Mammary epithelial cell (primary cell): ENCODE measurements at regions of chr1 and their contacts with region 1.

Region 1: GRCh38 chr1:170758992-170759391 is 95.1 kb downstream of the PRRX1 start:
- DNase-seq: no peak
- H3K4me3 ChIP-seq: no peak overlapping the region
- H3K27ac ChIP-seq: no peak overlapping the region
- H3K4me1 ChIP-seq: no peaks in the 10 kb centered on the region
- H3K27me3 ChIP-seq: no peaks in the 10 kb centered on the region
- CTCF ChIP-seq: no peak

Region 2: DNA sequence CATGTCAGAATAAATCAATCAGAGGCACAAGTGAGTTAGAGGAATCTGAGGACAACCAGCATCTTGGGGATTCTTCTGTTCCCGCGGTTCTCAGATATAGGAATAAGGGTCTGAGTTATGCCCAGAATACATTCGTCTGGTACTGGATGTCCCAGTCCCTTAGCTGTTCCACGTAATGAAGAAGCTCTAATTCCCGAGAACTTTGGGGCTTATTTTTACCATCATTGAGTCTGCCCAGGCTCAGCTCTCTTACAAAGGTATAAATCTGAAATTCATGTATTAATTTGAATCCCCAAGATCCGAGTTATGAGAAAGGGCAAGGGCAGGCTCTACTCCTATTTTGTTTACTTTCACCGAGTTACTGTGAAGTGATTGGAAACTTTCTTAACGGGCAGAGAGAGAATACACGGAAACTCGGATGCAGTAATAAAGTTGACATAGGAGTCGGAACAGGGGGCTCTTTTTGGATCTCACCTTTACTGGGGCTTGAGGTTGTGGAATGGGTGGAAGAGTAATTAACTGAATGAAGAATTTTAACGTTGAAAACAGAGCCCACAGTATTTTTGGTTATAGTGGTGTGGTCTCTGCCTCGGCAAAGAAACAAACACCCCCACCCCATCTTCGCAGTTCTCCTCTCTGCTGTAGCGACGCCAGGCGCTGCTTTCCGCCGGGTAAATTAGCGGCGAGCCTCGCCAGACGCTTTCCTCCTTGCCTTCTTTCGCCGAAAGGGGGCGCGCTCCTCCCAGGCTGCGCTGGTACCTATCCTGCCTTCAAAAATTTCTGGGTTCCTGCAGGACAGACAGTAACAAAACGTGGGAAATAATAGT is 88.0 kb before region 1 on chr1:
- CTCF ChIA-PET with region 1: no interaction called
- dilution Hi-C with region 1: no loop called
- in situ Hi-C with region 1: no loop called
- intact Hi-C with region 1: no loop called
- DNase-seq: no peak
- H3K4me3 ChIP-seq: no peak overlapping the region
- H3K27ac ChIP-seq: no peak overlapping the region
- H3K4me1 ChIP-seq: no peaks in the 10 kb centered on the region
- H3K27me3 ChIP-seq: peaks cover 3% of the 10 kb centered on the region
- CTCF ChIP-seq: no peak

Region 3: GRCh38 chr1:170692866-170693575 is 66.0 kb before region 1 on chr1:
- CTCF ChIA-PET with region 1: interaction called, 18 read pairs
- dilution Hi-C with region 1: no loop called
- in situ Hi-C with region 1: no loop called
- intact Hi-C with region 1: no loop called
- DNase-seq: peak; percentile 2
- H3K4me3 ChIP-seq: no peak overlapping the region
- H3K27ac ChIP-seq: no peak overlapping the region
- H3K4me1 ChIP-seq: peaks cover 11% of the 10 kb centered on the region
- H3K27me3 ChIP-seq: no peaks in the 10 kb centered on the region
- CTCF ChIP-seq: no peak